ENCODE measurements at regions of chr10 and their contacts with region 1.

Region 1: GRCh38 chr10:72331601-72332422 is 22.9 kb downstream of the DNAJB12 start:
- DNase-seq: peak; percentile 92 to 97 (median 94)
- H3K4me3 ChIP-seq: peak overlapping the region; percentile 12 to 47
- H3K4me3 Mint-ChIP-seq: peak overlapping the region; percentile 69 to 86 (median 82)
- H3K27ac ChIP-seq: peak overlapping the region; percentile 65
- H3K27ac Mint-ChIP-seq: peak overlapping the region; percentile 95 to 98 (median 97)
- H3K4me1 ChIP-seq: peaks cover 100% of the 10 kb centered on the region
- H3K4me1 Mint-ChIP-seq: peaks cover 51 to 97% (median 81%) of the 10 kb centered on the region in 4 donors
- H3K27me3 ChIP-seq: no peaks in the 10 kb centered on the region
- H3K27me3 Mint-ChIP-seq: no peaks in the 10 kb centered on the region

Region 2: GRCh38 chr10:72048450-72049124 is 283.2 kb before region 1 on chr10:
- CTCF ChIA-PET with region 1: interaction called, 75 read pairs
- POLR2A ChIA-PET with region 1: interaction called, 10 read pairs
- intact Hi-C with region 1: loop called (anchors 1 kb)
- DNase-seq: peak; percentile 81 to 84 (median 81)
- H3K4me3 ChIP-seq: no peak overlapping the region
- H3K4me3 Mint-ChIP-seq: no peak overlapping the region
- H3K27ac ChIP-seq: no peak overlapping the region
- H3K27ac Mint-ChIP-seq: peak overlapping the region in 3 of 7 donors; percentile 20 to 78 (median 70)
- H3K4me1 ChIP-seq: no peaks in the 10 kb centered on the region
- H3K4me1 Mint-ChIP-seq: peaks cover 1 to 8% (median 6%) of the 10 kb centered on the region in 4 donors
- H3K27me3 ChIP-seq: no peaks in the 10 kb centered on the region
- H3K27me3 Mint-ChIP-seq: no peaks in the 10 kb centered on the region

Region 3: GRCh38 chr10:72215652-72216549 is 115.9 kb before region 1 on chr10 and contains the starts of genes ANAPC16 and ASCC1:
- CTCF ChIA-PET with region 1: interaction called, 89 read pairs
- POLR2A ChIA-PET with region 1: interaction called, 31 read pairs
- intact Hi-C with region 1: loop called (anchors 1 kb)
- DNase-seq: peak; percentile 92 to 98 (median 96)
- H3K4me3 ChIP-seq: peak within 1 kb of the TSS; percentile 70 to 88
- H3K4me3 Mint-ChIP-seq: peak within 1 kb of the TSS; percentile 95 to 100 (median 98)
- H3K27ac ChIP-seq: peak within 1 kb of the TSS; percentile 88
- H3K27ac Mint-ChIP-seq: peak within 1 kb of the TSS; percentile 97 to 100 (median 99)
- H3K4me1 ChIP-seq: peaks cover 47% of the 10 kb centered on the region
- H3K4me1 Mint-ChIP-seq: peaks cover 31 to 58% (median 44%) of the 10 kb centered on the region in 4 donors
- H3K27me3 ChIP-seq: no peaks in the 10 kb centered on the region
- H3K27me3 Mint-ChIP-seq: no peaks in the 10 kb centered on the region
- total RNA-seq, gene ANAPC16: 114 to 118 TPM
- total RNA-seq, gene ASCC1: 14.3 to 17.5 TPM

Region 4: DNA sequence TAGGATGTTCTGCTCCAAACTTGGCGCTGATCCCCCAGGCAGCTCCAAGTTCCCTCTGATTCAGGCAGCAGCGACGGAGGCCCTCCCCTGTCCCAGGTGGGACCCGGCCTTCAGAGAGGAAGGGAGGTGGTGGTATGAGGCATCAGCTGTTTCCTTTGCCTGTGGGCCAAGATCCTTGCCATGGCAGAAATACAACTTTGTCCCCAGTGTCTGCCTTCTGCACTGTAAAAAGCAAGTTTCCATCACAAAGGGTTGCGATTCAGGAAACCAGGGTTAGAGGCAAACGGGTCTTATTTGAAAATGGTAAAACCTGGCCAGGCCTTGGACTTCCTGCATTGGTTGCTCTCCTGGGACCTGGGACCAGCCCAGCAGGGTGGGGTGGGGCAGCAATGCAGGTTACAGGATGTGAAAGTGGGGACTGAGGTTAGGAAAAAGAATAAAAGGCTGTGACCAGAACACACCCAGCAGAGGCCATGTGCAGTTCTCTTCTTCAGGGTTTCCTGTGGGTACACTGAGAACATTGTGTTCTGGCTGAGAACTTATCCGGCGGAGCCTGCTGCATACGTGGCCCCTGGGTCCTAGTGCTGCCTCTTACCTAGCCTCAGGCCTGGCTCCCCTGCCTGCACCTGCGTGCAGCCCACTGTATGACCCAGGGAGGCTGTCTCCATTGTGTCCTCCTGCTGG is 83.2 kb before region 1 on chr10:
- CTCF ChIA-PET with region 1: interaction called, 25 read pairs
- POLR2A ChIA-PET with region 1: interaction called, 19 read pairs
- intact Hi-C with region 1: loop called (anchors 1 kb)
- DNase-seq: peak; percentile 85 to 90 (median 87)
- H3K4me3 ChIP-seq: peak overlapping the region; percentile 31 to 33
- H3K4me3 Mint-ChIP-seq: peak overlapping the region; percentile 83 to 92 (median 86)
- H3K27ac ChIP-seq: peak overlapping the region; percentile 55
- H3K27ac Mint-ChIP-seq: peak overlapping the region; percentile 95 to 98 (median 96)
- H3K4me1 ChIP-seq: peaks cover 96% of the 10 kb centered on the region
- H3K4me1 Mint-ChIP-seq: peaks cover 58 to 91% (median 77%) of the 10 kb centered on the region in 4 donors
- H3K27me3 ChIP-seq: no peaks in the 10 kb centered on the region
- H3K27me3 Mint-ChIP-seq: no peaks in the 10 kb centered on the region

Region 5: GRCh38 chr10:72273410-72274212 is 58.2 kb before region 1 on chr10 and contains the start of gene DDIT4:
- CTCF ChIA-PET with region 1: interaction called, 168 read pairs
- POLR2A ChIA-PET with region 1: interaction called, 94 read pairs
- intact Hi-C with region 1: loop called (anchors 1 kb)
- DNase-seq: peak; percentile 95 to 98 (median 96)
- H3K4me3 ChIP-seq: peak within 1 kb of the TSS; percentile 99 to 100
- H3K4me3 Mint-ChIP-seq: peak within 1 kb of the TSS; percentile 96 to 100 (median 98)
- H3K27ac ChIP-seq: peak within 1 kb of the TSS; percentile 99
- H3K27ac Mint-ChIP-seq: peak within 1 kb of the TSS; percentile 83 to 99 (median 96)
- H3K4me1 ChIP-seq: peaks cover 51% of the 10 kb centered on the region
- H3K4me1 Mint-ChIP-seq: peaks cover 23 to 60% (median 39%) of the 10 kb centered on the region in 4 donors
- H3K27me3 ChIP-seq: no peaks in the 10 kb centered on the region
- H3K27me3 Mint-ChIP-seq: no peaks in the 10 kb centered on the region
- total RNA-seq, gene DDIT4: 23.1 to 24.5 TPM

Region 6: GRCh38 chr10:72297968-72298773 is 33.6 kb before region 1 on chr10:
- CTCF ChIA-PET with region 1: interaction called, 13 read pairs
- POLR2A ChIA-PET with region 1: interaction called, 53 read pairs
- intact Hi-C with region 1: loop called (anchors 1 kb)
- DNase-seq: peak; percentile 89 to 95 (median 91)
- H3K4me3 ChIP-seq: peak overlapping the region in 1 of 2 donors; percentile 71
- H3K4me3 Mint-ChIP-seq: peak overlapping the region; percentile 29 to 94 (median 86)
- H3K27ac ChIP-seq: peak overlapping the region; percentile 95
- H3K27ac Mint-ChIP-seq: peak overlapping the region; percentile 96 to 100 (median 100)
- H3K4me1 ChIP-seq: peaks cover 56% of the 10 kb centered on the region
- H3K4me1 Mint-ChIP-seq: peaks cover 26 to 67% (median 46%) of the 10 kb centered on the region in 4 donors
- H3K27me3 ChIP-seq: no peaks in the 10 kb centered on the region
- H3K27me3 Mint-ChIP-seq: no peaks in the 10 kb centered on the region

Region 7: DNA sequence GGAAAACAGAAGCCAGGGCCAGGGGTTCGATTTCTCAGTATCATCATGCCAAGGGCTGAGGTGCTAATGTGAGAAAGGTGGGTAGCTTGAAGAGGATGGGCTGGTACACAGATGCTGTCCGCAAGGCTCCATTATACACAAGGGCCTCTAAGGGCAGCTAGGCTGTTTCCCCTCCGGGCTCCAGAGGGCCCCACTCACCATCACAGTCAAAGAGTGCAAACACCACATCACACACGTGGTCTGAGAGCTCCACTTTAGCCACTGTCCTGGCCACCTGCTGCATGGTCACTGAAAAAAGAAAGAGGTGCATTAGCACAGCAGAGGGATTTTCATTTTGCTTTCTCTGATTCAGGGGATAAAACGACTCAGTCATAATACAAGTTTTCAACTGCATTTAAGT is 43.8 kb after region 1 on chr10:
- CTCF ChIA-PET with region 1: no interaction called
- POLR2A ChIA-PET with region 1: no interaction called
- intact Hi-C with region 1: no loop called
- DNase-seq: no peak
- H3K4me3 ChIP-seq: no peak overlapping the region
- H3K4me3 Mint-ChIP-seq: no peak overlapping the region
- H3K27ac ChIP-seq: no peak overlapping the region
- H3K27ac Mint-ChIP-seq: peak overlapping the region in 2 of 7 donors; percentile 0 to 29
- H3K4me1 ChIP-seq: peaks cover 16% of the 10 kb centered on the region
- H3K4me1 Mint-ChIP-seq: peaks cover under 1 to 4% (median 3%) of the 10 kb centered on the region in 4 donors
- H3K27me3 ChIP-seq: no peaks in the 10 kb centered on the region
- H3K27me3 Mint-ChIP-seq: no peaks in the 10 kb centered on the region

Region 8: GRCh38 chr10:72612203-72612826 is 280.5 kb after region 1 on chr10:
- CTCF ChIA-PET with region 1: no interaction called
- POLR2A ChIA-PET with region 1: no interaction called
- intact Hi-C with region 1: no loop called
- DNase-seq: no peak
- H3K4me3 ChIP-seq: no peak overlapping the region
- H3K4me3 Mint-ChIP-seq: peak overlapping the region in 4 of 8 donors; percentile 26 to 58 (median 46)
- H3K27ac ChIP-seq: no peak overlapping the region
- H3K27ac Mint-ChIP-seq: peak overlapping the region in 4 of 7 donors; percentile 15 to 68 (median 52)
- H3K4me1 ChIP-seq: peaks cover 4% of the 10 kb centered on the region
- H3K4me1 Mint-ChIP-seq: peaks cover 12 to 20% (median 14%) of the 10 kb centered on the region in 4 donors
- H3K27me3 ChIP-seq: no peaks in the 10 kb centered on the region
- H3K27me3 Mint-ChIP-seq: no peaks in the 10 kb centered on the region

Region 9: DNA sequence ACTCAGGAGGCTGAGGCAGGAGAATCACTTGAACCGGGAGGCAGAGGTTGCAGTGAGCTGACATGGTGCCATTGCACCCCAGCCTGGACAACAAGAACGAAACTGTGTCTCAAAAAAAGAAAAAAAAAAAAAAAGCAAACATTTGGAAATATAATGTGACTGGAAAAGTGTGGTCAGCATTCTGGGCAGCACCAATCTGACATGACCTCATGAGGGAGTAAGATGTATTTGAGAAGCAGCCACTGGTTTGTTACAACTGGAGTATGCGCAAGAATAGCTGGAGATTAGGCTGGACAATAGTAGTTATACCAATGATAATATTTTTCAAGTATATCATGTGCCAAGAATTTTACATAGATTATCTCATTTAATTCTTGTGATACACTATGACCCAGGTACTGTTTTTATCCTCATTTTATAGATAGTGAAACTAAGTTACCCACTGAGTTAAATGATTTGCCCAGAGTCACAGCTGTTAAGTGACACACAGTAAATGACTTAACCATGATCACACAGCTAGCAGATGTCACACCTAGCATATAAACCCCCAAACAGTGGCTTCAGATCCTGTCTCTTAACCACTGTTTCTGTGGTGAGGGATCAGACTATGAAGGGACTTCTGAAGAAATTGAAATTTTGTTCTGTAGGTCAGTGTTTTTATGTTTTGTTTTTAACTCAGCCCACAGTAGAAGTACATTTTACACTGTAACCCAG is 371.2 kb after region 1 on chr10:
- CTCF ChIA-PET with region 1: no interaction called
- POLR2A ChIA-PET with region 1: no interaction called
- intact Hi-C with region 1: no loop called
- DNase-seq: no peak
- H3K4me3 ChIP-seq: no peak overlapping the region
- H3K4me3 Mint-ChIP-seq: no peak overlapping the region
- H3K27ac ChIP-seq: no peak overlapping the region
- H3K27ac Mint-ChIP-seq: peak overlapping the region in 1 of 7 donors; percentile 41
- H3K4me1 ChIP-seq: no peaks in the 10 kb centered on the region
- H3K4me1 Mint-ChIP-seq: peaks cover 5 to 8% (median 6%) of the 10 kb centered on the region in 4 donors
- H3K27me3 ChIP-seq: no peaks in the 10 kb centered on the region
- H3K27me3 Mint-ChIP-seq: no peaks in the 10 kb centered on the region